Activated CD8-positive, alpha-beta T cell treated with anti-CD3 and anti-CD28 coated beads, Interleukin-2, amount 10 ng/mL, durations not matched to agents 7 days and 5 days (primary cell): ENCODE measurements at regions of chr19 and their contacts with region 1.

Region 1: GRCh38 chr19:47243776-47244547 is 12.4 kb upstream of the CCDC9 start:
- DNase-seq: peak; percentile 95
- ATAC-seq: peak; percentile 83
- H3K4me3 Mint-ChIP-seq: peak overlapping the region; percentile 66
- H3K27ac Mint-ChIP-seq: peak overlapping the region; percentile 92
- H3K4me1 Mint-ChIP-seq: peaks cover 42% of the 10 kb centered on the region
- H3K27me3 Mint-ChIP-seq: no peaks in the 10 kb centered on the region

Region 2: GRCh38 chr19:47066376-47067214 is 177.4 kb before region 1 on chr19:
- CTCF ChIA-PET with region 1: no interaction called
- POLR2A ChIA-PET with region 1: no interaction called
- DNase-seq: no peak
- ATAC-seq: no peak
- H3K4me3 Mint-ChIP-seq: no peak overlapping the region
- H3K27ac Mint-ChIP-seq: no peak overlapping the region
- H3K4me1 Mint-ChIP-seq: no peaks in the 10 kb centered on the region
- H3K27me3 Mint-ChIP-seq: no peaks in the 10 kb centered on the region

Region 3: DNA sequence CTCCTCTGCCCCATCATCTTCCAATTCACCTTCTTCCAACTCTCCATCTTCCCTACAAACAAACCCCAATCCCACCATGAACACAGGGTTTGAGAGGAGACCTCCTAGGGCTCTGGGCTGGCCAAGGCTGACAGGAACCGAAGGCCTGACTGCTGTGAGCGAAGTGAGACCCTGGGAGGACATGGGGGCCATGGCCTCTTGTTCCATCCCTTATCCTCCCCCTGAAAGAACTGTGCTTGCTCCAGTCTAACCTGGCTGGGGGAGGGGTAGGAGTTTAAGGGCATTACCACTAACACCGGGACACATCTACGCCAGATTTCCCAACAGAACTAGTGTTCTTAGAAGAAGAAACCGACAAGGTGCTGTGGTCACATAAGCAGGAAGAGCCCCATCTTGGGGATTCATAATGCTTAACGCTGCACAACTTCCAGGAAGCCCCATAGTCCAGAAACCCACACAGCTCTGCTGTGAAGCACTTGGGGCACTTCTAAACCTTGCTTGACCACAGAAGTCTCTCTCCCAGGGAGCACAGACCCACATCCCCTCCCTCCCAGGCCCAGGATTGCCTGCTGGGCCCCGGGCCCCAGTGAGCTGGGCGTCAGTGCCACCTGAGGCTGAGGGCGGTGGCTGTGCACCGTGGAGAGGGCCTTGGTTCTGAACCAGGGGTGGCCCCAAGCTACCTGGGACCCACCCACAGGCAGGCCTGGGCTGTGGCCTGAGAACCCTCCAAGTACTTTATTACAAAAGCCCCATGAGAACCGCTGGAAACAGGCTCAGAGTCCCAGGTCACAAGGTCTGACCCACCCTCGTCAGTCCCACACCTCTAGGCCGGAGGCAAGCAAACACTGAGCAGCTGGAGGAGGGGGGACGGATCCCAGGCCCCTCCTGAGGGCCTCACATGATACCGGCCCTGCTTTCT is 149.1 kb before region 1 on chr19:
- CTCF ChIA-PET with region 1: interaction called, 13 read pairs
- POLR2A ChIA-PET with region 1: interaction called, 4 read pairs
- DNase-seq: peak; percentile 64
- ATAC-seq: peak; percentile 82
- H3K4me3 Mint-ChIP-seq: peak overlapping the region; percentile 78
- H3K27ac Mint-ChIP-seq: peak overlapping the region; percentile 87
- H3K4me1 Mint-ChIP-seq: peaks cover 79% of the 10 kb centered on the region
- H3K27me3 Mint-ChIP-seq: no peaks in the 10 kb centered on the region

Region 4: GRCh38 chr19:47157431-47158321 is 86.3 kb before region 1 on chr19:
- CTCF ChIA-PET with region 1: interaction called, 286 read pairs
- POLR2A ChIA-PET with region 1: interaction called, 7 read pairs
- DNase-seq: peak; percentile 61
- ATAC-seq: peak; percentile 12
- H3K4me3 Mint-ChIP-seq: peak overlapping the region; percentile 63
- H3K27ac Mint-ChIP-seq: peak overlapping the region; percentile 85
- H3K4me1 Mint-ChIP-seq: peaks cover 60% of the 10 kb centered on the region
- H3K27me3 Mint-ChIP-seq: no peaks in the 10 kb centered on the region

Region 5: GRCh38 chr19:47203254-47203653 is 40.7 kb before region 1 on chr19:
- CTCF ChIA-PET with region 1: interaction called, 484 read pairs
- POLR2A ChIA-PET with region 1: no interaction called
- DNase-seq: no peak
- ATAC-seq: no peak
- H3K4me3 Mint-ChIP-seq: no peak overlapping the region
- H3K27ac Mint-ChIP-seq: peak overlapping the region; percentile 5
- H3K4me1 Mint-ChIP-seq: peaks cover 5% of the 10 kb centered on the region
- H3K27me3 Mint-ChIP-seq: no peaks in the 10 kb centered on the region

Region 6: DNA sequence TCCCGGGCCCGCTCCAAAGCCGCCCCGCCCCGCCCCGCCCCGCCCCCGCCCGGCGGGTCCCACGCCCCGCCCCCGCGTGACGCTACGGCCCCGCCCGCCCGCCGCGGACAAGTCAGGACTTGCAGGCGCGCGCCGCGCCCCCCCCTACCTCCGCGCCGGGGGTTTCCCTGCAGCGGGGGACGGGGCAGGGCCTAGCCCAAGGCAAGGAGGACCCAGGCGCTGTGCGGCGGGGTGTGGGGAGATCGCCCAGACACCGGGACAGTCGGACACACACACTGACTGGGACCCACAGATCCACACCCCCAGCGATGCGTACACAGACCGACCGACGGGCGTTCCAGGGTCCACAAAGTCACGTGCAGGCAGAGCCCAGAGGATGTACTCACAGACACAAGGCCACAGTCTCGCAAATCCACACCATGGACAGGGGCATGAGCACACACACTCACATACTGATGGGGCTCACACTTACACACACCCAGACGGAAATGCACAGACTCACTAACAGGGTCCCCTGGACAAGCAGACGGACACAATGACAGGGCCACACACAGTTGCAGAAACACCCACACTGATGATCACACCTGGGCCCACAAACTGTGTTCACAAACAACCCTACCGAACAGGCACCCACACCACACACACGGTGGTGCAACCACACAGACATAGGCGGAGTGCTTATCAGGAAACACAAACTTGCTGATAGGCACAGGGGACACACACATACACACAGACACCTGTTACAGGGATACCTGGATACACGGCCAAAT is 12.6 kb before region 1 on chr19:
- CTCF ChIA-PET with region 1: interaction called, 143 read pairs
- POLR2A ChIA-PET with region 1: interaction called, 44 read pairs
- DNase-seq: peak; percentile 92
- ATAC-seq: peak; percentile 52
- H3K4me3 Mint-ChIP-seq: peak overlapping the region; percentile 72
- H3K27ac Mint-ChIP-seq: peak overlapping the region; percentile 87
- H3K4me1 Mint-ChIP-seq: peaks cover 28% of the 10 kb centered on the region
- H3K27me3 Mint-ChIP-seq: peaks cover 3% of the 10 kb centered on the region

Region 7: GRCh38 chr19:47284324-47284899 is 40.5 kb after region 1 on chr19:
- CTCF ChIA-PET with region 1: no interaction called
- POLR2A ChIA-PET with region 1: no interaction called
- DNase-seq: peak; percentile 68
- ATAC-seq: peak; percentile 43
- H3K4me3 Mint-ChIP-seq: no peak overlapping the region
- H3K27ac Mint-ChIP-seq: no peak overlapping the region
- H3K4me1 Mint-ChIP-seq: peaks cover 7% of the 10 kb centered on the region
- H3K27me3 Mint-ChIP-seq: no peaks in the 10 kb centered on the region